H1 (cell line): ENCODE measurements at regions of chr6 and their contacts with region 1.

Region 1: GRCh38 chr6:158072083-158072721 is 90.5 kb downstream of the SYNJ2 start:
- DNase-seq: peak; percentile 23 to 85
- H3K4me3 ChIP-seq: no peak overlapping the region
- H3K27ac ChIP-seq: no peak overlapping the region
- H3K4me1 ChIP-seq: peaks cover 0 to 1% (median 0%) of the 10 kb centered on the region in 4 experiments; a peak in 2 of 7 replicates
- H3K27me3 ChIP-seq: no peaks in the 10 kb centered on the region
- CTCF ChIP-seq: peak; percentile 81 to 90 (median 86)
- EP300 ChIP-seq: no peak
- POLR2A ChIP-seq: no peak
- RAD21 ChIP-seq: peak; percentile 94 to 97

Region 2: DNA sequence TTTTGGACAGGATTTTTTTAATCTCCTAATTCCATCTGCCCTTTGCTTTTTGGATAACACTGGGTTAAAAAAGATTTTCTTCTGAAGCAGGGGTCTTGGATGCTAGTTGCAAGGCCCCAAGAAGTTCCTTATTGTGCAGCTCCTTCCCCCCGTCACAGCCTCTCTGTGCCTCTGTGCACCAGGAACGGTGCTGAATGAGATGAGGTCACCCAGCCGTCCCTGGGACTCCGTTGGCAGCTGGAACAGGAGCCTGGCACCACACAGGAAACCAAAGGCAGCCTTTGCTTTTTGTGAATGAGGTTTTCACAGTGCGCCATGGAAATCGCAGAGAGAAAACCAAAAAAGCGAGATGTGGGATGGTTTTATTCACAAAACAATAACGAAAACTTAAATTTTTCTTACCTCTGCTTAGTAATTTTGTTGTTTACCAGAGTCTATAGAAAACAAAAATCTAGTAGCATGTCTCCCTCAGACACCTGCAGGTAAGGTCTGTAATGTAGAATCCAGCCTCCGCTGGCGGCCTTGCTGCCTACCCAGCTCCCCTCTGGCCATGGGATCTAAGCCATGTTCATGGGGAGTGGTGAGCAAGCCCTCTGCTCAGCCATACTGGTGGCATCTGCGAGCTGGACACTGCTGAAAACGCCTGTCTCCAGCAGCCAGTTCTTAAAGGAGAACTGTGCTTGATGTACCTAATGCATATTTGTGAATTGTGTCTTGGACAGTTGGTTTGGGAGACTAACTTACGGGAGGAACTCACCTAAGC is 130.9 kb before region 1 on chr6:
- CTCF ChIA-PET with region 1: interaction called, 13 read pairs
- POLR2A ChIA-PET with region 1: no interaction called
- DNase-seq: no peak
- H3K4me3 ChIP-seq: no peak overlapping the region
- H3K27ac ChIP-seq: no peak overlapping the region
- H3K4me1 ChIP-seq: no peaks in the 10 kb centered on the region
- H3K27me3 ChIP-seq: no peaks in the 10 kb centered on the region
- CTCF ChIP-seq: no peak
- EP300 ChIP-seq: no peak
- POLR2A ChIP-seq: no peak
- RAD21 ChIP-seq: no peak

Region 3: DNA sequence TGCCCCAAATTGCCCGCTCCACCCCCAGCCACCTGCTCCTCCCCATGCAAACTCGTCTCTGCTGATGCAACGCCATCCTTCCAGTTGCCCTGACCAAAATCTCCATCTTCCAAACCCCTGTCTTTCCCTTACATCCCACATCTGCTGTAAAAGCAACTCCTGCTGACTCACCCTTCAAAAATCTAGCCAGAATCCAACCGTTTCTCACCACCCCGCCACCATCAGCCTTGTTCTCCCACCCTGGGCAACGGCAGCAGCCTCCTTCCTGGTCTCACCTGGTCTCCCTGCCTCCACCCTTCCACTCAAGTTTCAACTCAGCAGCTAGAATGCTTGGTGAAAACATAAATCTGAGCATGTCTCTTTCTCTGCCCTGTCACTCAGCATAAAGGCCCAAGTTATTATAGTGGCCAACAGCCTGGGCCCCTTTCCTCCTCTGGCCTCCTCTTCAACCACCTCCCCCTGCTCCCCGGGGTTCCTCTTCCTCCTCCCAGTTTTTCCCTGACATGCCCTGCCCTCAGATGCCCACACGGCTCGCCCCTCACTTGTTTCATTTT is 97.8 kb before region 1 on chr6:
- CTCF ChIA-PET with region 1: interaction called, 12 read pairs
- POLR2A ChIA-PET with region 1: no interaction called
- DNase-seq: no peak
- H3K4me3 ChIP-seq: 0 out of 8 replicates have a peak overlapping the region, but pooled peaks of 1 of the 4 experiments have one; percentile 4
- H3K27ac ChIP-seq: no peak overlapping the region
- H3K4me1 ChIP-seq: peaks cover 0 to 4% (median 0%) of the 10 kb centered on the region in 4 experiments; a peak in 1 of 7 replicates
- H3K27me3 ChIP-seq: no peaks in the 10 kb centered on the region; a peak in 2 of 7 replicates
- CTCF ChIP-seq: no peak
- EP300 ChIP-seq: no peak
- POLR2A ChIP-seq: no peak
- RAD21 ChIP-seq: no peak

Region 4: DNA sequence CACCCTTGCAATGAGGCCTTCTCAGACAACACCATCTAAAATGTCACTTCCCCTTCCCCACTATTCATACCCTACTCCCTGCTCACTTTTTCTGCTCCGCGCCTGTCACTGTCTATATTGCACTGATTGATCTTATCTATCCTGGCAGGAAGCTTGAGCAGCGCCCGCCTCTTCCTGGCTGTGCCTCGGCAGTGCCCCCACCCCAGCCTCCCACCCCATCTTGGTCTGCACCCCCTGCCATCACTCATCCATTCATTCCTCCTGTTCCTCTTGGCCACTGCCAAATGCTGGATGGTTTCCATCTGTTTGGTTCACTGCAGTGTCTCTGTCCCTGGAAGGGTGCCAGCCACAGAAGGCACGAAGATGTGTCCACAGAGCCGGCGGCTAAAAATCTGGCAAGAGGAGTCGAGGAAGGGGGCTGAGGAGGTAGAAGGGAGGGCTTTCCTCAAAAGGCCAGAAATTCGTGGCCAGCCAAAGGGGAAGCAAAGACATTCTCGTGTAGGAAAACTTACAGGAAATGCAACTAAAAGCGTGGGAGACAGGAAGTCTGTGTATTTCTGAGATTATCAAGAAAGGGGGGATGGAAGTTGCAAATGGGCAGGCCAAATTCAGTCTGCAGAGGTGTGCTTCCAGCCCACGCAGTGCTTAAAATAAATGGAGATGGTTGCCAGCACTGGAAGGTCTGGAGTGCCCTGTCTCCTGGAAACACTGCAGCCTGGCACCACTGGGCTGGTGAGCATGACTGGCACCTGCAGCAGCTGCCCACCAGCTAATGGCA is 62.9 kb before region 1 on chr6:
- CTCF ChIA-PET with region 1: interaction called, 10 read pairs
- POLR2A ChIA-PET with region 1: no interaction called
- DNase-seq: no peak
- H3K4me3 ChIP-seq: no peak overlapping the region
- H3K27ac ChIP-seq: no peak overlapping the region
- H3K4me1 ChIP-seq: no peaks in the 10 kb centered on the region; a peak in 3 of 7 replicates
- H3K27me3 ChIP-seq: no peaks in the 10 kb centered on the region
- CTCF ChIP-seq: no peak
- EP300 ChIP-seq: no peak
- POLR2A ChIP-seq: no peak
- RAD21 ChIP-seq: no peak

Region 5: DNA sequence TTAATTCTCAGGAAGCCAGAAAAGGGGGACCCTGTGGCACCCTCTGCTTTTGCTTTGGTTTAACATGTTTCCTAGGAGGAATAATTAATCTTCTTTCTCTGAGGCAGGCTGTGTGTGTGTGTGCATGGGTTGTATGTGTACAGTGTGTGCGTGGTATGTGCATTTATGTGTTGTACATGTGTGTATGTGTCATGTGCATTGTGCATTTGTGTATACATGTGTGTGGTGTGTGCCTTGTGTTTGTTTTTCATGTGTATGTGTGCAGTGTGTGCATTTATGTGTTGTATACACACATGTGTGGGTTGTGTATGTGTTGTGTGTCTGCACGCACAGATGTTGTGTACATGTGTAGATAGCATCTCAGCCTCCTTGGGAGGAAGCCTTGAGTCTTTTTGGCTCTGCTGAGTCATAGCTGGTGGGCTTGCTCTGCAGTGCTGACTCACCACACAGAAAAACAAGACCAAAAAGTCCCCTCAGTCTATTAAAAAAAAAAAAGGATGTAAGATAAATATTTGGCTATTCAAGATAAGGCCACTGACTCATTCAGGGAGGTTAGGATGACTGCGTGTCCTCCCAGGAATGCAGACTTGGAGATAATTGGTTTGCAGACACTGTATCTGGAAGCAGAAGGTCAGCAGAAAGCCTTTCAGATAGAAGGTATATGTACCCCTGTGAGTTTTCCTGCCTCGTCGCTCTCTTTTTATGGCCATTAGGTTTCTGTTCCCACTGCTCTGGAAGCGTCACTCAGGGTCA is 32.0 kb before region 1 on chr6:
- CTCF ChIA-PET with region 1: interaction called, 15 read pairs
- POLR2A ChIA-PET with region 1: no interaction called
- DNase-seq: no peak
- H3K4me3 ChIP-seq: no peak overlapping the region
- H3K27ac ChIP-seq: no peak overlapping the region
- H3K4me1 ChIP-seq: peaks cover 0 to 10% (median 6%) of the 10 kb centered on the region in 4 experiments; a peak in 5 of 7 replicates
- H3K27me3 ChIP-seq: no peaks in the 10 kb centered on the region
- CTCF ChIP-seq: no peak
- EP300 ChIP-seq: no peak
- POLR2A ChIP-seq: no peak
- RAD21 ChIP-seq: no peak

Region 6: GRCh38 chr6:158060455-158061360 is 11.5 kb before region 1 on chr6:
- CTCF ChIA-PET with region 1: interaction called, 54 read pairs
- POLR2A ChIA-PET with region 1: interaction called, 5 read pairs
- DNase-seq: no peak
- H3K4me3 ChIP-seq: no peak overlapping the region
- H3K27ac ChIP-seq: 0 out of 2 replicates have a peak overlapping the region, but pooled peaks have one; percentile 38
- H3K4me1 ChIP-seq: peaks cover 0 to 5% (median 0%) of the 10 kb centered on the region in 4 experiments; a peak in 1 of 7 replicates
- H3K27me3 ChIP-seq: no peaks in the 10 kb centered on the region
- CTCF ChIP-seq: no peak
- EP300 ChIP-seq: 0 out of 3 replicates have a peak, but pooled peaks of 1 of the 2 experiments have one; percentile 21
- POLR2A ChIP-seq: no peak
- RAD21 ChIP-seq: no peak